ENCODE measurements at regions of chr19 and their contacts with region 1.

Region 1: DNA sequence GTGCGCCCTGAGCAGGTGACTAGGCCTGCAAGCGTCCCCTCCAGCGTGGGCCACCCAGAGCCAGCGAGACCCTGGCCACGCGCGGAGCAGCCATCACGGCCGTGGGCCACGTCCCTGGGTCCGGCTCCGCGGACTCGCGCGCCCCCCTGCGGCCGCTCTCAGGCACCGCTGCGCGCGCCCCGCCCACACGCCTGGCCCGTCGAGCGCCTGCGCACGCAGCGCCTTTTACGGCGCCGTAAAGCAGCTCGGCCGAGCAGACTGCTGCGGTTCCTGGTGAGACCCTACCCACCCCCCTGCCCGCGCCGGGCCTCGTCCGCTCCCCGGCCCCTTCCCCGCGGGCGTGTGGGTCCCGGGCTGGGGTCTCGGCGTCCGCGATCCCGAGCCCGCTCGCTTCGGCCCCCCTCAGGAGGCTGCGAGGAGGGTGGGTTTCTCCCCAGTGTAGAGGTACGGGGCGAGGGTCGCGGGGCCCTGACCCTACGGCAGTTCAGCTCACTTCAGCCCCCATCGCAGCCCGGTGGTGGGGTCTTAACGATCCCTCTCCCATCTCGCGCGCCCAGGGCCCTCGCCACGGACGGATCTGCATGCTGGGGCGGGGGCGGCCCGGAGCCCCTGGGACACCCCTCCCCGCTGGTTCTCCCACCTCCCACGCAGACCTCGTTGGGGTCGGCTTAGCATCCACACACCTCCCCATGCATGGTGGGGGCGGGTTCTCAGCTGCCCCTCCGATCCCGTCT is at the start of gene TRAPPC5:
- DNase-seq: peak; percentile 75 to 92 (median 87)
- ATAC-seq: peak; percentile 61
- H3K4me3 ChIP-seq: peak within 1 kb of the TSS; percentile 92 to 99
- H3K4me3 Mint-ChIP-seq: peak within 1 kb of the TSS; percentile 91
- H3K27ac ChIP-seq: peak within 1 kb of the TSS; percentile 65 to 66
- H3K27ac Mint-ChIP-seq: peak within 1 kb of the TSS; percentile 92
- H3K4me1 ChIP-seq: peaks cover 33% of the 10 kb centered on the region
- H3K4me1 Mint-ChIP-seq: peaks cover 48% of the 10 kb centered on the region
- H3K27me3 ChIP-seq: peaks cover 0 to 7% of the 10 kb centered on the region in 2 experiments
- H3K27me3 Mint-ChIP-seq: peaks cover 12% of the 10 kb centered on the region
- CTCF ChIP-seq: peak; percentile 89
- total RNA-seq, gene TRAPPC5: 32.4 to 39.5 TPM

Region 2: DNA sequence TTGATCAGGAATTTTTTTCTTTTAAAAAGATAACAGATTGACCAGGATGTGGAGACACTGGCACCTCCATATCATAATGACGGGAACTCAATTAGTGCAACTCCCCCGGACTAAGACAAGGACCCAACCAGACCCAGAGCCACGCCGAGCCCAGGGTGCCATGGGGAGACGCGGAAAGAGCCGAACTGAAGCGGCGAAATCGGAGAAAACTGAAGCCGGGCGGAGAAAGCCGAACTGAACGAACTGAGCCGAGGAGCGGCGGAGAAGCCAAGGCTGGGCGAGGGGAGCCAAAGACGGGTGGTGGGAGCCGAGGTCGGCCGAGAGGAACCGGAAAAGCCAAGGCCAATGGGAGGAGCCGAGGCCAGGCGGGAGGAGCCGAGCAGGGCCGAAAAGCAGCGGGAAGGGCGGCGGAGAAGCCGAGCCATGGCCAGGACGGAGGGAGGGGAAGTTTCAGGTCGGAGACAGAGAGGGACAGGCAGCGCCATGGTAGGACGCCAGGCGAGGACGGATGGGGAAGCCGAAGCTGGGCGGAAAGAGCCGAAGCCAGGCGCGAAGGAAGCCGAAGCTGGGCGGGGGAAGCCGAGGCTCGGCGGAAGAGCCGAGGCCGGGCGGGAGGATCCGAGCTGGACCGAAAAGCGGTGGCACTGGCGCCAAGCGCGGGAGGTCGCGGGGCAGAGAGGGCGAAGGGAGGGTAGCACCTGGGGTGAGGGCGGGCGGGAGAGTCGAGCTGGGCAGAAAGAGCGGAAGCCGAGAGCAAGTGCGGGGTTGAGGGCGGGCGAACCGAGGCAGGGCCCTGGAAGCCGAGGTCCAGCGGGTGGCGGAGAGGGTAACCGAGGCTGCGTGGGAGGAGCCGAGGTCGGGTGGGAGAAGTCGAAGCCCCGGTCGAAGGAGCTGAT is 581.8 kb before region 1 on chr19:
- CTCF ChIA-PET with region 1: interaction called, 4 read pairs
- POLR2A ChIA-PET with region 1: interaction called, 3 read pairs
- intact Hi-C with region 1: loop called (anchors 1 kb)
- DNase-seq: peak; percentile 79 to 94 (median 88)
- ATAC-seq: peak; percentile 94
- H3K4me3 ChIP-seq: peak overlapping the region; percentile 90
- H3K4me3 Mint-ChIP-seq: peak overlapping the region; percentile 92
- H3K27ac ChIP-seq: peak overlapping the region; percentile 68 to 93
- H3K27ac Mint-ChIP-seq: peak overlapping the region; percentile 95
- H3K4me1 ChIP-seq: peaks cover 14% of the 10 kb centered on the region
- H3K4me1 Mint-ChIP-seq: peaks cover 30% of the 10 kb centered on the region
- H3K27me3 ChIP-seq: no peaks in the 10 kb centered on the region
- H3K27me3 Mint-ChIP-seq: no peaks in the 10 kb centered on the region
- CTCF ChIP-seq: no peak

Region 3: DNA sequence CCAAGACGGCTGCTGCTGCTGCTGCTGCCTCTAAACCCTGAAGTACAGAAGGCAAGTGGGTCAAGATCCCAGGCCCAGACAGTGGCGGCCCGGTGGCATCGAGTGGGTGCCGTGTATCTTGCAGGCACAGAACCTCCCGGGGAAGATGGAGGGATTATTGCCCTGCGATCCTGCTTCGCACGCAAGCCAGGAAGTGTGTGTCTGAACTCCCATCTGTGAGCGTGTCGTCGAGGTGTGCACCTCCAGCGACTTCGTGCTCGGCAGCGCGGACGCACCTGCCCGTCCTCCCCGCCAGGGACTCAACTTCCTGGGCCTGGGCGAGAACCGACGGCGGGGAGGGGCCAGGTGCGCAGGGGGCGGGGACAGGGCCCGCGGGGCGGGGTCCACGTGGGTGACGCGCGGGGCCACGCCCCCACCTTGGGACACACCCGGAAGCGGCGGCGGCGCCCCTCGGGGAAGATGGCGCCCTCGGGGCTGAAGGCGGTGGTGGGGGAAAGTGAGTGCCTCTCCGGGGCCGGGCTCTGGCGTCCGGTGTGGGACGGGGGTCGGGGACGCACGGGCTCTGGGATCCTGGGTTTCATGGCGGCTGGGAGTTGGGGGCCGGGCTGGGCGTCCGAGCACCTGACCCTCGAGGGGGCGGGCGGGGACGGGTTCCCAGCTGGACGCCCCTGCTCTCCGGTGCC is 43.9 kb before region 1 on chr19 and contains the start of gene STXBP2:
- CTCF ChIA-PET with region 1: interaction called, 6 read pairs
- POLR2A ChIA-PET with region 1: interaction called, 3 read pairs
- intact Hi-C with region 1: loop called (anchors 5 kb)
- DNase-seq: peak; percentile 89 to 99 (median 94)
- ATAC-seq: peak; percentile 99
- H3K4me3 ChIP-seq: peak within 1 kb of the TSS; percentile 36 to 93
- H3K4me3 Mint-ChIP-seq: peak within 1 kb of the TSS; percentile 85
- H3K27ac ChIP-seq: peak within 1 kb of the TSS; percentile 70 to 97
- H3K27ac Mint-ChIP-seq: peak within 1 kb of the TSS; percentile 91
- H3K4me1 ChIP-seq: peaks cover 24% of the 10 kb centered on the region
- H3K4me1 Mint-ChIP-seq: peaks cover 41% of the 10 kb centered on the region
- H3K27me3 ChIP-seq: no peaks in the 10 kb centered on the region
- H3K27me3 Mint-ChIP-seq: no peaks in the 10 kb centered on the region
- CTCF ChIP-seq: peak; percentile 34
- total RNA-seq, gene STXBP2: 260 to 270 TPM

Region 4: DNA sequence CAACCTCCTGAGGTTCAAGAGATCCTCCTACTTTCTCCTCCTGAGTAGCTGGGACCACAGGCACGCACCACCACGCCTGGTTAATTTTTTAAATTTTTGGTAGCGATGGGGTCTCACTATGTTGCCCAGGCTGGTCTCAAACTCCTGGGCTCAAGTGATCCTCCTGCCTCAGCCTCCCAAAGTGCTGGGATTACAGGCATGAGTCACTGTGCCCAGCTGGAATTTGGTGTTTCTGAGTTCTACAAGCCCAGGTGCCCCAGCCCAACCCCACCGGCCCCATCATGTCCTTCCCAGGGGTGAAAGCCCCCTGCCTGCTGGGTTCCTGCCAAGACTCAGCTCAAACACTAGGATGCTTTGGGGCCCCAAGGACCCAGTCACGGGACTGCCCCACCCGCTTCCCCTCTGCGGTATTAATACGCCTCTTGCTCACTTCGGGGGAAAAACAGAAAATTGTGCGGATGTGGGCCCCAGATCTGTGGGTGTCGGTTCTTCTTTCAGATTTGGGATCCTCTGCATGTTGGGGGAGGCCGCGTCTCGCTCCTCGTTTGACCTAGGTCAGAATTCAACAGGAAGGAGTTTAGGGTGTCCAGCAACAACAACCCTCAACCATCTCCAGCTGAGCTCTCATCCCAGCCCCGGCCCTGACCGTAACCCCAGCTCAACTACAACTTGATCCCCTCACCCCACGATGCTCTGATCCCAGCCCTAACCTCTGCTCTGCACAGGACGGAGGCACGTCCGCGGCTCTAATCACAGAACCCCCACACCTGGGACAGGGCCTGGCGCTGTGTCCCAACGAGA is 24.8 kb after region 1 on chr19:
- CTCF ChIA-PET with region 1: interaction called, 5 read pairs
- POLR2A ChIA-PET with region 1: interaction called, 7 read pairs
- intact Hi-C with region 1: loop called in 1 of 2 experiments (anchors 2 kb)
- DNase-seq: peak; percentile 44 to 93 (median 78)
- ATAC-seq: peak; percentile 94
- H3K4me3 ChIP-seq: peak overlapping the region; percentile 21 to 49
- H3K4me3 Mint-ChIP-seq: peak overlapping the region; percentile 80
- H3K27ac ChIP-seq: peak overlapping the region; percentile 43 to 72
- H3K27ac Mint-ChIP-seq: peak overlapping the region; percentile 98
- H3K4me1 ChIP-seq: peaks cover 39% of the 10 kb centered on the region
- H3K4me1 Mint-ChIP-seq: peaks cover 53% of the 10 kb centered on the region
- H3K27me3 ChIP-seq: no peaks in the 10 kb centered on the region
- H3K27me3 Mint-ChIP-seq: no peaks in the 10 kb centered on the region
- CTCF ChIP-seq: no peak

Region 5: GRCh38 chr19:7829561-7830271 is 148.9 kb after region 1 on chr19 and contains the start of gene EVI5L:
- CTCF ChIA-PET with region 1: interaction called, 5 read pairs
- POLR2A ChIA-PET with region 1: no interaction called
- intact Hi-C with region 1: loop called in 1 of 2 experiments (anchors 1 kb)
- DNase-seq: peak; percentile 99 to 100 (median 100)
- ATAC-seq: peak; percentile 82
- H3K4me3 ChIP-seq: peak within 1 kb of the TSS; percentile 44 to 45
- H3K4me3 Mint-ChIP-seq: peak within 1 kb of the TSS; percentile 80
- H3K27ac ChIP-seq: peak within 1 kb of the TSS in 1 of 2 experiments; percentile 66
- H3K27ac Mint-ChIP-seq: peak within 1 kb of the TSS; percentile 83
- H3K4me1 ChIP-seq: peaks cover 13% of the 10 kb centered on the region
- H3K4me1 Mint-ChIP-seq: peaks cover 16% of the 10 kb centered on the region
- H3K27me3 ChIP-seq: no peaks in the 10 kb centered on the region
- H3K27me3 Mint-ChIP-seq: no peaks in the 10 kb centered on the region
- CTCF ChIP-seq: no peak
- total RNA-seq, gene EVI5L: 4.1 to 4.2 TPM

Region 6: DNA sequence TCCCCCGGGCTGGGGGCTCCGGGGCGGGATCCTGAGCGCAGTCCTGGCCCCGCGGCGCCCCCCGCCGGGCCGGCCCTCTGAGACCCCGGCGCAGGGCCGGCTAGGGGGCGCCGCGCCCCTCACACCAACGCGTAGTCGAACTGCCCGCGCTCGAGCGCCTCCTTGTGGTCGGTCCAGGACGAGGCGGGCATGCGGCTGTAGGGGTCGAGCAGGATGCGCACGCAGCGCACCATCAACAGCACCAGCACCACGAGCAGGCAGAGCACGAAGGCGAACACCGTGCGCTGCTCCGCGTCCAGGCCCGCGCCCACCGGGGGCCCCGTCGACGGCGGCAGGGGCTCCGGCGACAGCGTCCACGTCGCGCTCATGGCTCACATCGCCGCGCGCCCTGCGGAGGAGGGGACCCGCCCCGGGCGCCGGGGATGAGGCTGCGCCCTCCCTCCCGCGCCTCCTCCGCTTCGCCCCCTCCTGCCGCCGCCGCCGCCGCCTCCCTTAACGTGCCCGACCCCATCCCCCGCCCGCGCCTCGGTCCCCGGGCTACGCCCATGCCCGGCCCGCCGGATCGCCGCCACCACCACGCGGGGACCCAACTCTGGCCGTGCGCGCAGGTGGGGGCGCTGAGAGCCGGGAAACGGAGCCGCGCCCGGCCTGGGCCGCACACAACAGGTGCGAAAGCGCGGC is 244.5 kb after region 1 on chr19:
- CTCF ChIA-PET with region 1: interaction called, 3 read pairs
- POLR2A ChIA-PET with region 1: interaction called, 3 read pairs
- intact Hi-C with region 1: loop called (anchors 1 to 2 kb)
- DNase-seq: peak; percentile 60 to 90 (median 84)
- ATAC-seq: peak; percentile 21
- H3K4me3 ChIP-seq: no peak overlapping the region
- H3K4me3 Mint-ChIP-seq: peak overlapping the region; percentile 77
- H3K27ac ChIP-seq: no peak overlapping the region
- H3K27ac Mint-ChIP-seq: peak overlapping the region; percentile 45
- H3K4me1 ChIP-seq: peaks cover 24% of the 10 kb centered on the region
- H3K4me1 Mint-ChIP-seq: peaks cover 32% of the 10 kb centered on the region
- H3K27me3 ChIP-seq: no peaks in the 10 kb centered on the region
- H3K27me3 Mint-ChIP-seq: no peaks in the 10 kb centered on the region
- CTCF ChIP-seq: peak; percentile 73